A549 (cell line): ENCODE measurements at regions of chr16 and their contacts with region 1.

Region 1: GRCh38 chr16:75198135-75198600 is 8.8 kb downstream of the CTRB2 start:
- DNase-seq: no peak
- ATAC-seq: peak; percentile 22 to 44; a peak in 3 of 6 replicates
- H3K4me3 ChIP-seq: no peak overlapping the region
- H3K27ac ChIP-seq: peak overlapping the region in 1 of 2 experiments; percentile 33; a peak in 2 of 6 replicates
- H3K4me1 ChIP-seq: no peaks in the 10 kb centered on the region
- CTCF ChIP-seq: no peak
- EP300 ChIP-seq: no peak
- POLR2A ChIP-seq: no peak
- RAD21 ChIP-seq: no peak

Region 2: GRCh38 chr16:75218256-75219070 is 20.3 kb after region 1 on chr16 and contains the start of gene CTRB1:
- CTCF ChIA-PET with region 1: interaction called, 25 read pairs
- POLR2A ChIA-PET with region 1: no interaction called
- DNase-seq: no peak
- ATAC-seq: peak in 1 of 2 experiments; percentile 44; a peak in 1 of 6 replicates
- H3K4me3 ChIP-seq: no peak within 1 kb of the TSS
- H3K27ac ChIP-seq: no peak within 1 kb of the TSS
- H3K4me1 ChIP-seq: no peaks in the 10 kb centered on the region
- CTCF ChIP-seq: no peak
- EP300 ChIP-seq: no peak
- POLR2A ChIP-seq: no peak
- RAD21 ChIP-seq: no peak
- polyA plus RNA-seq, gene CTRB1: not detected in 2 replicates

Region 3: DNA sequence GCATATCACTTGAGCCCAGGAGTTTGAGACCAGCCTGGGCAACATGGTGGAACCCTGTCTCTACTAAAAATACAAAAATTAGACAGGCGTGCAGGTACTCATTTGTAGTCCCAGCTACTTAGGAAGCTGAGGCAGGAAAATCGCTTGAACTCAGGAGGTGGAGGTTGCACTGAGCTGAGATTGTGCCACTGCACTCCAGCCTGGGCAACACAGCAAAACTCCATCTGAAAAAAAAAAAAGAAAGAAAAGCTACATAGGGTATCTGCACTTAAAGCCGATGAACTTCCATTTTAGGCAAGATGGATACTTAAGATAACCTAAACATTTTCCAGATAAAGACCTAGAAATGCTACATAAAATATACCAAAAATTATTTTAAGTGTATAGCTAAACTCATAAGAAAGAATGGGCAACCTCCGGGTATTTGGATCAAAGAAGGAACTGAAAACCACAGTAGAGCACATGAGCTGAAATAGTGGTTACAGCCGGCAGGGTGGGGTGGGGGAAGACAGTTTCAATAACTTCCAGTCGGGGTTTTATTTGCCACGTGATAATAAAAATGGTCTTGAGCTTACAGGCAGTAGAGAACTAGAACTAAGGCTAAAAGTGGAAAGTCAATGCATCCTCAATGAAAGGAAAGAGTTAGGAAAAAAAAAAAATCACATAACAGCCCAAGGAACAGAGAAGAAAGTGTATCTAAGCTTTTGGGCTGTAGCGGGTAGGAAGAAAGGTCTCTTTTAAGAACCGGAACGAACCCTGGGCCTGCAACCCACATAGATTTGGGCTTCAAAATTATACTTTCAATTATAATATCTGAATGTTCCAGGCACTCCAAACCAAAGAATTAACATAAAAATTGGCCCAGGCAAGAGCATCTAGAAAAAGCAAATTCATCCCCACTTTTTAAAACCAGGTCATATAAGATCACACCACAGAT is 182.0 kb after region 1 on chr16:
- CTCF ChIA-PET with region 1: interaction called, 37 read pairs
- POLR2A ChIA-PET with region 1: interaction called, 3 read pairs
- DNase-seq: no peak
- ATAC-seq: no peak
- H3K4me3 ChIP-seq: no peak overlapping the region
- H3K27ac ChIP-seq: no peak overlapping the region
- H3K4me1 ChIP-seq: peaks cover 15% of the 10 kb centered on the region
- CTCF ChIP-seq: no peak
- EP300 ChIP-seq: no peak
- POLR2A ChIP-seq: no peak
- RAD21 ChIP-seq: no peak

Region 4: DNA sequence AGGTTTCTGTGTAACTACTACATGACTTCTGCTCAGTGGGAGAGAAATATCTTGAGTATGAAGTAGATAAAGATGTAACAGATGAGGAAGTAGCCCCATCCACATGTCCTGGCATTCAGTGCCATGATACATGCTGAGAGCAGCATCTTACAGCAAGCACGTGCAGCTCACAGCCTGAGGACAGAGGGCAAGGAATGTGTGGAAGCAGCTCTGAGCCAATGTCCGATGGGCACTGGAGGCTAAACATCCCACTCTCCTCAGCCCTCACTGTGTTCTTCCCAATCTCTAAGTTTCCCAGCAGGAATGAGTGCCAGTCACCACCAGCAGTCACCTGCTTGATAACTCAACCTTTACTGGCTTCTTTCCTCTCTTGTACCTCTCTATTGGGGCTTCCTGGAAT is 194.7 kb after region 1 on chr16:
- CTCF ChIA-PET with region 1: interaction called, 158 read pairs
- POLR2A ChIA-PET with region 1: no interaction called
- DNase-seq: no peak
- ATAC-seq: no peak
- H3K4me3 ChIP-seq: no peak overlapping the region
- H3K27ac ChIP-seq: no peak overlapping the region
- H3K4me1 ChIP-seq: no peaks in the 10 kb centered on the region
- CTCF ChIP-seq: no peak
- EP300 ChIP-seq: no peak
- POLR2A ChIP-seq: no peak
- RAD21 ChIP-seq: no peak

Region 5: DNA sequence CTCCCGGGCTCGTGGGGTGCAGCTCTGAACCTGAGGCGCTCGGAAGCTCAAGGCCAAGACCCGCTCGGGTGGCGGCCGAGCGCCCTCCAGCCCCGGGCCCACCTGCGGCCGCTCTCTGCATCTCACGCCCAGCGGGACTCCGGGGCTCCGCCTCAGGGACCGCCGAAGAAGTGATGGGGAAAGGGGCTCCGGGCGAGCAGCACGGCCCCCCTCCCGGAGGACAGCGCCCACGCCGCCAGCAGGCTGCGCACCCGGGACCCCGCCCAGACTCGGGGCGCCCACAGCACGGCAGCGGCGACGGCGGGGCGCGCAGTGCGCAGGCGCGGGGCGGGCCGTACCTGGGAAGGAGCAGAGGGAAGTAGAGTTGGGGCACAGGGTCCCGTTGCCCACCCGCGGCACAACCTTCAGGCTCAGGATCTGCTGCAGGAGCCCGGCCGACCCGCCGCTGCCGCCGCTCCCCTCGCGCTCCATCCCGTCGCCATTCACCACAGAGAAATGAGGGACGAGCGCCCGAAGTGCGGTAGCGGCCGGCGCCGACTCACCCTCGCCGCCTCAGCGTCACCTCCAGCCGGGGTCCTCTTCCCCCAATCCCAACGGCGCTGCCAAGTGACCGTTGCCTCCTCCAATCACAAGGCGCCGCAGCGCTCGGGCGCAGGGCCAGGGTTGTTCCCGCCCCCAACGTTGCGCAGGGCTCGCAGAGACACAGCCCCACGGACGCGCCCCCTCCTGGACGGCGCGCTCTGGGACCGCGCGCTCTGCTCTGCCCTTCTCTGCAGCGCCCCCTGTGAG is 266.2 kb after region 1 on chr16 and contains the start of gene TMEM170A:
- CTCF ChIA-PET with region 1: interaction called, 26 read pairs
- POLR2A ChIA-PET with region 1: no interaction called
- DNase-seq: peak; percentile 94 to 99
- ATAC-seq: peak; percentile 95 to 98
- H3K4me3 ChIP-seq: peak within 1 kb of the TSS; percentile 97
- H3K27ac ChIP-seq: peak within 1 kb of the TSS; percentile 94 to 95
- H3K4me1 ChIP-seq: peaks cover 20% of the 10 kb centered on the region; the same call in 2 of the 3 replicates
- CTCF ChIP-seq: peak; percentile 100
- EP300 ChIP-seq: no peak
- POLR2A ChIP-seq: peak; percentile 98
- RAD21 ChIP-seq: peak; percentile 53 to 74
- polyA plus RNA-seq, gene TMEM170A: 21.2 and 21.7 TPM in 2 replicates